Right ventricle myocardium superior (tissue), 1 donor: ENCODE measurements at regions of chr3 and their contacts with region 1.

Region 1: GRCh38 chr3:172194702-172195406 is 155.5 kb downstream of the FNDC3B start:
- DNase-seq: no peak
- ATAC-seq: peak; percentile 71

Region 2: GRCh38 chr3:172159962-172160538 is 34.8 kb before region 1 on chr3:
- intact Hi-C with region 1: loop called (anchors 5 kb)
- DNase-seq: peak; percentile 62
- ATAC-seq: peak; percentile 86